Right ventricle myocardium inferior (tissue), 1 donor: ENCODE measurements at regions of chr3 and their contacts with region 1.

Region 1: GRCh38 chr3:134473868-134474546 is 11.8 kb downstream of the ANAPC13 start:
- DNase-seq: peak; percentile 45
- ATAC-seq: peak; percentile 33

Region 2: DNA sequence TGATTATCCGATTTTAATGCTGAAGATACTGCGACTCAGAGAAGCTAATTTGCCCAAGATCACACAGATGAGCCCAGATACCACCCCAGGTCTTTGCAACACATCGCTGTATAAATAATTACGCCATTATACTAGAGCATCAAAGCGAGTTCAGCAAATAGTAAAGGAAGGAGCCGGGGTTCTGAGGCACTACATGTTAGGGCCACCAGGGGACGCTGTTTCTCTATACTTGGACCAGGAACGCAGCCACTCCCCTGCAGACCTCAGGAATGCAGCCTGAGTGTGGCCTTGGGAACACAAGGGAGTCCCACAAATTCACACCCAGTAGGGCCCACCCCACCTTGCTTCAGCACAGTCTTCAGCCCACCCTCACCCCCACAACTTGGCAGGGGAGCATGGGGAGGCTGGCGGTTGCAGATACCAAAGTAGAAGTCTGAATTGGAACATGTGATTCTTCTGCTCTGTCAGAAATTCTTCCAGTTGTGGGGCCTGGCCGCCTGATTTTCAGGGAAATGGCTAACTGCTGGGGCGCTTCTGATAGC is 165.6 kb before region 1 on chr3:
- intact Hi-C with region 1: loop called (anchors 1 kb)
- DNase-seq: no peak
- ATAC-seq: peak; percentile 68

Region 3: GRCh38 chr3:134563601-134564000 is 89.6 kb after region 1 on chr3:
- intact Hi-C with region 1: no loop called
- DNase-seq: no peak
- ATAC-seq: no peak